ENCODE measurements at regions of chr11 and their contacts with region 1.

Region 1: GRCh38 chr11:61342207-61342803 is 9.3 kb downstream of the TKFC start:
- DNase-seq: no peak
- H3K4me3 ChIP-seq: no peak overlapping the region
- H3K27ac ChIP-seq: no peak overlapping the region
- H3K4me1 ChIP-seq: no peaks in the 10 kb centered on the region
- H3K27me3 ChIP-seq: no peaks in the 10 kb centered on the region
- CTCF ChIP-seq: no peak

Region 2: GRCh38 chr11:61325649-61326414 is 16.5 kb before region 1 on chr11:
- CTCF ChIA-PET with region 1: no interaction called
- dilution Hi-C with region 1: no loop called
- in situ Hi-C with region 1: no loop called
- intact Hi-C with region 1: no loop called
- DNase-seq: peak; percentile 76
- H3K4me3 ChIP-seq: no peak overlapping the region
- H3K27ac ChIP-seq: peak overlapping the region; percentile 15
- H3K4me1 ChIP-seq: peaks cover 19% of the 10 kb centered on the region
- H3K27me3 ChIP-seq: no peaks in the 10 kb centered on the region
- CTCF ChIP-seq: no peak

Region 3: DNA sequence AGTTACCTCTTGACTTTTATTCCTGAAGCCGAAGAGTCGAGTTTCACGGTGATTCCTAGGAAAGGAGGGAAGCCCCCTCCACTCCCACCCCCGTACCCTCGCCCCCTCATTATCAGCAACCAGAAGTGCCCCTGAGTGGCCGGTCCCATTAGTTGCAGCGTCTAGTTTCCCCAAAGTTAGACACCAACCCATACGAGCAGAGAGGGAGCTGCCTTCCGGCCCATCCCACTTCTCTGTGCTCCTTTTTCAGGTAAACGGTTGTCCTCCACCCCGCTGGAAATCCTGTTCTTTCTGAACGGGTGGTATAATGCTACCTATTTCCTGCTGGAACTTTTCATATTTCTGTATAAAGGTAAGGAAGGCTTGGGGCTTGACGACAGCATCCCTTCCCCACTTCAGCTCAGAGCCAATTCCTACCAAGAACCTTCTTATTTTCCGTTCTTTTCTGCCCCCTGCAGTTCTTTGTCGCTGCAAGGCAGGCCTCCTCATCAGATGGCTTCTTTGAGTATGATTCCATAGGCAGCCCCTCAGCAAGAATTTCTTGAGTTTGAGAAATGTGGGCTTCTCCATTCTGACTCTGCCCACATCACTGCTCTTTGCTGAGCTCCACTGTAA is 50.8 kb after region 1 on chr11:
- CTCF ChIA-PET with region 1: no interaction called
- dilution Hi-C with region 1: loop called (anchors 5 kb)
- in situ Hi-C with region 1: loop called in 1 of 2 experiments (anchors 5 kb)
- intact Hi-C with region 1: no loop called
- DNase-seq: no peak
- H3K4me3 ChIP-seq: peak overlapping the region; percentile 77 to 81 (median 80)
- H3K27ac ChIP-seq: peak overlapping the region; percentile 25
- H3K4me1 ChIP-seq: peaks cover 14% of the 10 kb centered on the region
- H3K27me3 ChIP-seq: no peaks in the 10 kb centered on the region
- CTCF ChIP-seq: peak; percentile 8 to 38

Measured in mammary epithelial cell (primary cell).